GM10248 (cell line): ENCODE measurements at regions of chr2 and their contacts with region 1.

Region 1: GRCh38 chr2:9555297-9556141 is at the start of gene ADAM17:
- DNase-seq: peak; percentile 93
- CTCF ChIP-seq: peak; percentile 67

Region 2: GRCh38 chr2:9451231-9451630 is 104.3 kb before region 1 on chr2:
- CTCF ChIA-PET with region 1: no interaction called
- POLR2A ChIA-PET with region 1: no interaction called
- DNase-seq: no peak
- CTCF ChIP-seq: no peak

Region 3: GRCh38 chr2:9538000-9538507 is 17.5 kb before region 1 on chr2:
- CTCF ChIA-PET with region 1: interaction called, 16 read pairs
- POLR2A ChIA-PET with region 1: interaction called, 8 read pairs
- DNase-seq: peak; percentile 23
- CTCF ChIP-seq: no peak

Region 4: GRCh38 chr2:9545502-9545901 is 10.0 kb before region 1 on chr2:
- CTCF ChIA-PET with region 1: interaction called, 16 read pairs
- POLR2A ChIA-PET with region 1: no interaction called
- DNase-seq: no peak
- CTCF ChIP-seq: no peak